AG04450 (cell line): ENCODE measurements at regions of chr19 and their contacts with region 1.

Region 1: GRCh38 chr19:39412100-39412866 is at the start of gene PLEKHG2:
- DNase-seq: peak; percentile 100
- H3K4me3 ChIP-seq: peak within 1 kb of the TSS; percentile 84
- H3K27ac ChIP-seq: peak within 1 kb of the TSS; percentile 92
- H3K27me3 ChIP-seq: no peaks in the 10 kb centered on the region
- CTCF ChIP-seq: peak; percentile 75
- polyA plus RNA-seq, gene PLEKHG2: 12.3 and 19.1 TPM in 2 replicates

Region 2: DNA sequence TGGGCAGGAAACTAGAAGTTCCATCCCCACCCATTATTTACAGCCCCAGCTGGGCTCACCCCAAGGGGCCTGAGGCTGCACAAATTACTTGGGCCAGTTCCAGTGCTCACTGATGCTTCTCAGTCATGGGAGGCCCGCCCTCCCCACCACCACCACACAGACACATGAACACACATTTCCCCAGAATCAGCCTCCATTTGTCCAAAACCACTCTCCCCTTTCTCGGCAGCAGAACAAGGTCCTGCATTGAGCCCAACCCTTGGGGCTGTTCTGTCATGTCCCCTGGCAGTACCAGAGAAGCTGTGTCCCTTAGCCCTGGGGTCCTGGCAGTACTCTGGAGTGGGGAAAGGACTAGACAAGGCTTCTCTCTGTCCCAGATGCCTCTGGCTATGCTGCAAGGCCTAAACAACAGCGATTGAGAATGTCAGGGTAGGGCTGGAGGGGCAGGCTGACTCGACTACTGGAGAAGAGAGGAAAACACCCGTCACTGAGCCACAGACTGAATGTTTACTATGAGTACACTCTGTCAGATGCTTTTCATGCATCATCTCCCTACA is 48.3 kb before region 1 on chr19:
- CTCF ChIA-PET with region 1: no interaction called
- POLR2A ChIA-PET with region 1: no interaction called
- DNase-seq: no peak
- H3K4me3 ChIP-seq: no peak overlapping the region
- H3K27ac ChIP-seq: peak overlapping the region; percentile 86
- H3K27me3 ChIP-seq: no peaks in the 10 kb centered on the region
- CTCF ChIP-seq: no peak

Region 3: GRCh38 chr19:39397360-39398296 is 14.7 kb before region 1 on chr19:
- CTCF ChIA-PET with region 1: interaction called, 67 read pairs
- POLR2A ChIA-PET with region 1: interaction called, 22 read pairs
- DNase-seq: no peak
- H3K4me3 ChIP-seq: no peak overlapping the region
- H3K27ac ChIP-seq: peak overlapping the region; percentile 57
- H3K27me3 ChIP-seq: no peaks in the 10 kb centered on the region
- CTCF ChIP-seq: peak; percentile 96

Region 4: GRCh38 chr19:39428283-39429112 is 16.2 kb after region 1 on chr19:
- CTCF ChIA-PET with region 1: interaction called, 4 read pairs
- POLR2A ChIA-PET with region 1: interaction called, 11 read pairs
- DNase-seq: peak; percentile 85
- H3K4me3 ChIP-seq: no peak overlapping the region
- H3K27ac ChIP-seq: peak overlapping the region; percentile 99
- H3K27me3 ChIP-seq: no peaks in the 10 kb centered on the region
- CTCF ChIP-seq: no peak